H1 (cell line): ENCODE measurements at regions of chr9 and their contacts with region 1.

Region 1: GRCh38 chr9:38160613-38161215 is 91.7 kb upstream of the SHB start:
- DNase-seq: peak in 1 of 2 experiments; percentile 87
- H3K4me3 ChIP-seq: no peak overlapping the region
- H3K27ac ChIP-seq: no peak overlapping the region
- H3K4me1 ChIP-seq: no peaks in the 10 kb centered on the region
- H3K27me3 ChIP-seq: no peaks in the 10 kb centered on the region
- CTCF ChIP-seq: peak; percentile 76 to 91 (median 82)
- EP300 ChIP-seq: no peak
- POLR2A ChIP-seq: no peak
- RAD21 ChIP-seq: peak; percentile 74 to 83

Region 2: GRCh38 chr9:38026021-38026809 is 134.5 kb before region 1 on chr9:
- CTCF ChIA-PET with region 1: interaction called, 11 read pairs
- POLR2A ChIA-PET with region 1: no interaction called
- DNase-seq: no peak
- H3K4me3 ChIP-seq: no peak overlapping the region
- H3K27ac ChIP-seq: no peak overlapping the region
- H3K4me1 ChIP-seq: peaks cover 34 to 54% (median 40%) of the 10 kb centered on the region in 4 experiments
- H3K27me3 ChIP-seq: no peaks in the 10 kb centered on the region
- CTCF ChIP-seq: no peak
- EP300 ChIP-seq: no peak
- POLR2A ChIP-seq: no peak
- RAD21 ChIP-seq: no peak

Region 3: GRCh38 chr9:38060681-38061080 is 100.0 kb before region 1 on chr9:
- CTCF ChIA-PET with region 1: no interaction called
- POLR2A ChIA-PET with region 1: no interaction called
- DNase-seq: no peak
- H3K4me3 ChIP-seq: no peak overlapping the region
- H3K27ac ChIP-seq: no peak overlapping the region
- H3K4me1 ChIP-seq: peaks cover 11 to 24% (median 20%) of the 10 kb centered on the region in 4 experiments
- H3K27me3 ChIP-seq: no peaks in the 10 kb centered on the region
- CTCF ChIP-seq: no peak
- EP300 ChIP-seq: no peak
- POLR2A ChIP-seq: no peak
- RAD21 ChIP-seq: no peak

Region 4: DNA sequence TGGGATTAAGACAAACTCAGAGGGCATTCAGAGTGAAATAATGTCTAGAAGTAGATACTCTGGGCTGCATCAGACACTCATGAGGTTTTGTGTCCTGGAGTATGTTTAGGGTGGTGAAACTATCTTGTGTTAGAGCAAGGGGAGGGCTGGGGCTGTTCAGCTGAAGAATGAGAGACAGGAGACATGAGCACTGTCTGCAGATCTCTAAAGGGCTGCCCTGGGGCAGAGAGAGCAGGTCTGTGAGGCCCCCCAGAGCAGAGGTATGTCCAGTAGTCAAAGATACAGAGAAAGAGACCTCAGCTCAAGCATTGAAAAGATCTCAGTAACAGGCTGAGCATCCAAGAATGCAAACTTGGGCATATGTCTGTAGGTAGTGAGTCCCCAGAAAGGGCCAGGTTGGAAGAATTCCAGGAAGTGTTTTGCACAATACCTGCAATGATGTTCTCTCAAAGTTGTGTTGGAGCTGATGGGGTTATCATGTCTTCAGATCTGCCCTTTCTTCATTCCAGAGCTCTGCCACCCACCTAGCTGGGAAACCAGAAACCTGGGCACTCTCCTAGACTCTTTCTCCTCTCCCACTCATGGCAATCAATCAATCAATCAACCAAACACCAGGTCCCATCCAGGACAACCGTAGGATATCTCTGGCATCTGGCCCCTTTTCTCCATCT is 45.7 kb before region 1 on chr9:
- CTCF ChIA-PET with region 1: interaction called, 11 read pairs
- POLR2A ChIA-PET with region 1: no interaction called
- DNase-seq: no peak
- H3K4me3 ChIP-seq: no peak overlapping the region
- H3K27ac ChIP-seq: no peak overlapping the region
- H3K4me1 ChIP-seq: no peaks in the 10 kb centered on the region
- H3K27me3 ChIP-seq: no peaks in the 10 kb centered on the region; a peak in 1 of 7 replicates
- CTCF ChIP-seq: no peak
- EP300 ChIP-seq: no peak
- POLR2A ChIP-seq: no peak
- RAD21 ChIP-seq: no peak

Region 5: GRCh38 chr9:38126730-38127129 is 34.0 kb before region 1 on chr9:
- CTCF ChIA-PET with region 1: interaction called, 14 read pairs
- POLR2A ChIA-PET with region 1: no interaction called
- DNase-seq: no peak
- H3K4me3 ChIP-seq: no peak overlapping the region
- H3K27ac ChIP-seq: no peak overlapping the region
- H3K4me1 ChIP-seq: no peaks in the 10 kb centered on the region
- H3K27me3 ChIP-seq: peaks cover 0 to 3% (median 0%) of the 10 kb centered on the region in 4 experiments; a peak in 1 of 7 replicates
- CTCF ChIP-seq: no peak
- EP300 ChIP-seq: no peak
- POLR2A ChIP-seq: no peak
- RAD21 ChIP-seq: no peak

Region 6: GRCh38 chr9:38141746-38142591 is 18.7 kb before region 1 on chr9:
- CTCF ChIA-PET with region 1: interaction called, 21 read pairs
- POLR2A ChIA-PET with region 1: no interaction called
- DNase-seq: no peak
- H3K4me3 ChIP-seq: no peak overlapping the region
- H3K27ac ChIP-seq: no peak overlapping the region
- H3K4me1 ChIP-seq: peaks cover 0 to 6% (median 3%) of the 10 kb centered on the region in 4 experiments; a peak in 2 of 7 replicates
- H3K27me3 ChIP-seq: peaks cover 0 to 6% (median 2%) of the 10 kb centered on the region in 4 experiments; a peak in 2 of 7 replicates
- CTCF ChIP-seq: no peak
- EP300 ChIP-seq: no peak
- POLR2A ChIP-seq: no peak
- RAD21 ChIP-seq: no peak

Region 7: GRCh38 chr9:38149647-38150046 is 11.1 kb before region 1 on chr9:
- CTCF ChIA-PET with region 1: interaction called, 21 read pairs
- POLR2A ChIA-PET with region 1: no interaction called
- DNase-seq: no peak
- H3K4me3 ChIP-seq: no peak overlapping the region
- H3K27ac ChIP-seq: no peak overlapping the region
- H3K4me1 ChIP-seq: peaks cover 0 to 6% (median 3%) of the 10 kb centered on the region in 4 experiments; a peak in 2 of 7 replicates
- H3K27me3 ChIP-seq: peaks cover 0 to 4% (median 0%) of the 10 kb centered on the region in 4 experiments; a peak in 1 of 7 replicates
- CTCF ChIP-seq: no peak
- EP300 ChIP-seq: no peak
- POLR2A ChIP-seq: no peak
- RAD21 ChIP-seq: no peak

Region 8: GRCh38 chr9:38172585-38172984 is 11.9 kb after region 1 on chr9:
- CTCF ChIA-PET with region 1: interaction called, 45 read pairs
- POLR2A ChIA-PET with region 1: no interaction called
- DNase-seq: peak in 1 of 2 experiments; percentile 17
- H3K4me3 ChIP-seq: no peak overlapping the region
- H3K27ac ChIP-seq: no peak overlapping the region
- H3K4me1 ChIP-seq: peaks cover 0 to 12% (median 3%) of the 10 kb centered on the region in 4 experiments; a peak in 4 of 7 replicates
- H3K27me3 ChIP-seq: no peaks in the 10 kb centered on the region
- CTCF ChIP-seq: no peak
- EP300 ChIP-seq: no peak
- POLR2A ChIP-seq: no peak
- RAD21 ChIP-seq: no peak